SK-N-SH (cell line): ENCODE measurements at regions of chr2 and their contacts with region 1.

Region 1: DNA sequence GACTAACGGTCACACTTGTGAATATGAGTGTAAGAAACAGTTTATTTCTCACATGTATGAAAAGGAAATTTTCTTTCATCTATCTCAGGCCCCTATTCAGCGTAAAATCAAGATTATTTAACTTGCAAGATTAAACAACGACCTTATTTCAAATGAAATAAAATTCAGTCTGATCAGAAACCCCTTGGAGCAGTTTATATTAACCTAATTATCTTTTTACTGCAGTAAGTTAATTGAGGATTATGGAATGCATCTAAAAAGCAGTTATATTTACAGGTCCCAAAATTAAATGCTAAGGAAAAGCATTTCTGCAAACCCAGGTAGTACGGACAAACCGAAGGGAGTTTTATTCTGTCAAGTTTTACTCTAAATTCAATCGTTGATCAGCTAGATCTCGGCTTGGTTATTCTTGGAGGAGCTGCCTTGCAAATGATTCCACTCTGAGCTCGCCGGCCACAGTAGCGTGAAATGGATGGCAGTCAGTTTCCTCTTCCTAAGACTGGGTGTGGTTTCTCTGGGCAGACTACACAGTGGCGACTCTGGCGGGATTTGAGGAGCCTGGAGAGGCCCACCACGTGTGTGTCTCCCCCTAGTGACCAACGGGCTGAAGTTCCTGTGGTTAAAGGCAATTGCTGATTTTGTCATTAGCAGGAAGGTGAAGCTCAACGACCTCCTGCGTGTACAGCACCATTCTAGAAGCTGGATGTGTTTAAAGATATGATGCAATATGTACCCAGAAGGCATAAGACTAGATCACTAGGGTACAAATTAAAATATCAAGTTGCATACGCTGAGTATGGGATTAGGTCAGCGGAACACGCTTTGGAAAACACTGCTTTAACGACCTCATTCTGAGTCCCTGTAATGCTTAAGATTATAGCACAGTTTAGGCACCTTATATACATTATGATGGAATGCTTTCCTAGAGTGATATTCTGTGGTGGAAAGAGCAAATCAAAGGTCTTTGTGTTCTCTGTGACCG is 36.4 kb downstream of the PRKRA start:
- DNase-seq: peak; percentile 79
- H3K4me3 ChIP-seq: peak overlapping the region; percentile 55 to 75
- H3K27ac ChIP-seq: peak overlapping the region; percentile 89 to 96
- H3K4me1 ChIP-seq: peaks cover 3 to 6% of the 10 kb centered on the region in 2 experiments; a peak in 3 of 4 replicates
- H3K27me3 ChIP-seq: no peaks in the 10 kb centered on the region
- CTCF ChIP-seq: peak; percentile 94
- EP300 ChIP-seq: no peak
- RAD21 ChIP-seq: peak; percentile 85

Region 2: DNA sequence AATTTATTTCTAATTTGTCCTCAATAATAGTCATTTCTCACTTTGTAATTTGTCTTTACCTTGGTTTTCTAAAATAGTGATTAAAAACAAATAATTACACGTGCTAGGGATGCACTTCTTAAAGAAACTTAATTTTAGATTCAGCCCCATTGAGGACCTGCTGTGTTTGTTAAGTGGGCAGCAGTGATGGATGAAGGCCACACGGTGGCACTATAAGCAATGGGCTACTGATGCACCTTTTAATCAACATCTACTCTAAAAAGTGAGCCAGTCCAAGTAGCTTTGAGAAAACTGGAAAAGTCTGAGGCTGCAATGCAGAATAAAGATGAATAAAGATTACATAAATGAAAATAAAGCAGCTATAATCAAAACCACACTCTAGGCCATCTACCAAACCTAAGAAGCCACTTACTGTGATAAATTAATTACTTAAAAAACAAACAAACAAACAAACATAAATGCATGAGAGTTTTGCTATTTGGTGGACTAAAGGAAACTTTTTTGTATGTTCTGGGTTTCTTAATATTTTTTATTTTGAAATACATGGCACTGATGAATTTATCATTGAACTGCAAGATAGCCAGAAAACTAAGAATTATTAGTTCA is 431.3 kb before region 1 on chr2:
- CTCF ChIA-PET with region 1: interaction called, 11 read pairs
- POLR2A ChIA-PET with region 1: no interaction called
- DNase-seq: peak; percentile 70
- H3K4me3 ChIP-seq: no peak overlapping the region; a peak in 1 of 4 replicates
- H3K27ac ChIP-seq: no peak overlapping the region
- H3K4me1 ChIP-seq: peaks cover 6 to 12% of the 10 kb centered on the region in 2 experiments
- H3K27me3 ChIP-seq: no peaks in the 10 kb centered on the region
- CTCF ChIP-seq: peak; percentile 96
- EP300 ChIP-seq: no peak
- RAD21 ChIP-seq: peak; percentile 90

Region 3: DNA sequence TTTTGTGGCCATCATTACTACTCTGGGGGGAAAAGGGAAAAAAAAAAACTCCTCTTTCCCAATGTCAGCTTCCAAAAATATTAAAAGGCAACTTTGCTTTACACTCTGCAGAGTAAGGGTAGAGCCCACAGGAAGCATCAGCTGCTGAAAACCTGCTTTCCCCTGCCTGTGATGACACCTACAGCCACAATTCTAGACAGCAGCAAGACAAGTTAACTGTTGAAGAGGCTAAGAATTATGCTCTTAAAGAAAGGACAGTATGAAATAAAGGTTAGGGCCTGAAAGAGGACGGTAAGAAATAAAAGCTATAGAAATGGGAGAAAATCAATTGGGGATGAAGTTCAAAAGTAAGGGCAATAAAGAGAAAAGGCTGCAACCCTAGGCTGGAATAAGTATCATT is 345.0 kb before region 1 on chr2:
- CTCF ChIA-PET with region 1: no interaction called
- POLR2A ChIA-PET with region 1: no interaction called
- DNase-seq: no peak
- H3K4me3 ChIP-seq: peak overlapping the region in 1 of 2 experiments; percentile 6; a peak in 1 of 4 replicates
- H3K27ac ChIP-seq: no peak overlapping the region
- H3K4me1 ChIP-seq: peaks cover 8 to 11% of the 10 kb centered on the region in 2 experiments; a peak in 3 of 4 replicates
- H3K27me3 ChIP-seq: no peaks in the 10 kb centered on the region
- CTCF ChIP-seq: peak; percentile 31; the same call in 1 of the 2 replicates
- EP300 ChIP-seq: no peak
- RAD21 ChIP-seq: peak; percentile 62

Region 4: GRCh38 chr2:178128836-178129630 is 285.5 kb before region 1 on chr2:
- CTCF ChIA-PET with region 1: interaction called, 42 read pairs
- POLR2A ChIA-PET with region 1: interaction called, 3 read pairs
- DNase-seq: no peak
- H3K4me3 ChIP-seq: no peak overlapping the region
- H3K27ac ChIP-seq: no peak overlapping the region
- H3K4me1 ChIP-seq: no peaks in the 10 kb centered on the region
- H3K27me3 ChIP-seq: no peaks in the 10 kb centered on the region
- CTCF ChIP-seq: no peak
- EP300 ChIP-seq: no peak
- RAD21 ChIP-seq: no peak

Region 5: GRCh38 chr2:178317811-178318210 is 96.7 kb before region 1 on chr2:
- CTCF ChIA-PET with region 1: interaction called, 16 read pairs
- POLR2A ChIA-PET with region 1: no interaction called
- DNase-seq: no peak
- H3K4me3 ChIP-seq: no peak overlapping the region
- H3K27ac ChIP-seq: no peak overlapping the region
- H3K4me1 ChIP-seq: peaks cover 0 to 7% of the 10 kb centered on the region in 2 experiments; a peak in 2 of 4 replicates
- H3K27me3 ChIP-seq: no peaks in the 10 kb centered on the region
- CTCF ChIP-seq: no peak
- EP300 ChIP-seq: no peak
- RAD21 ChIP-seq: no peak

Region 6: DNA sequence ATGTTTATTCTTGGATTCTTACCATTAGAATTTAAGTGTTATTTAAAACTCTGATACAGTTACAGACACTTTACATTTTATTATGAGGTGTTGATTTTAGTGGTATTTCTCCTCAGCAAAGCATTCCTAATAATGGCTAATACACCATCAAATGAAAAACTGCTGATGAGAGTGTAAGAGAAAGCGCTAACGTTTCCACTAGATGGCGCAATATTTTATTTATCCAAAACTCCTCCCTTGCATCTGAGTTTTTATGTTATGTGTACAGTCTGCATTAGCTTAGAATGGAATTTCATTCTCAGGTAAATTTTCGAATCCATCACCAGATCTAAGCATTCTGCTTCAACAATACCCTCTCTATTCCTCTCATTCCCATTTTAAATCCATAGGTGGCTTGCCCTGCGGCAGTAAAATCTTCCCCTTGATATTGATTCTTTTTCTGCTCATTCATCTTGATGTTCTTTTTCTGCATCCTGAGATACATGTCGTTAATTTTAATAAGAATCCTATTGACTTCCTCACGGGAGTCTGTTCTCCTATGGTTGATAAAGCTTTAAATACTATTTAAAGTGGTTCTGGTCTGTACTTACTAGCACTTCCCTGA is 17.5 kb before region 1 on chr2:
- CTCF ChIA-PET with region 1: interaction called, 199 read pairs
- POLR2A ChIA-PET with region 1: interaction called, 7 read pairs
- DNase-seq: peak; percentile 44
- H3K4me3 ChIP-seq: no peak overlapping the region
- H3K27ac ChIP-seq: no peak overlapping the region
- H3K4me1 ChIP-seq: peaks cover 0 to 3% of the 10 kb centered on the region in 2 experiments; a peak in 1 of 4 replicates
- H3K27me3 ChIP-seq: no peaks in the 10 kb centered on the region
- CTCF ChIP-seq: peak; percentile 78
- EP300 ChIP-seq: no peak
- RAD21 ChIP-seq: peak; percentile 64

Region 7: DNA sequence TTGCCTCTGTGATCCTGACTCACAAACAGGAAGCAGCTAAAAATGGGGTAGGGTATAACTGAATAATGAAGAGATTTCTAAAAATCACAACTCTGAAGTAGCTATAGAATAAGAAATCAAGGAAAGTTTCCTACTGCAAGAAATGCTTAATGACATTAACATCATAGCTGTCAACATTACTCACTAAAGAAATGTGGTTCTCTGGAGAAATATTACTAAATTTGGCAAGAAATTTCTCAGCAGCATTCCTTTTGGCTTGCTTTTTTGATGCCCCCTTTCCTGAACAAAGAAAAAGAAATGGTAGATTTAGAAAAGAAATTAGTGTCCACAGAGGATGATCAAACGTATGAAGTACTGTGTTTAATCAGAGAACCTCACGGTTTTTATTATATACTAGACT is 26.9 kb after region 1 on chr2:
- CTCF ChIA-PET with region 1: interaction called, 12 read pairs
- POLR2A ChIA-PET with region 1: no interaction called
- DNase-seq: no peak
- H3K4me3 ChIP-seq: no peak overlapping the region
- H3K27ac ChIP-seq: no peak overlapping the region
- H3K4me1 ChIP-seq: no peaks in the 10 kb centered on the region
- H3K27me3 ChIP-seq: no peaks in the 10 kb centered on the region
- CTCF ChIP-seq: no peak
- EP300 ChIP-seq: no peak
- RAD21 ChIP-seq: no peak